Calu3 (cell line): ENCODE measurements at regions of chr12 and their contacts with region 1.

Region 1: DNA sequence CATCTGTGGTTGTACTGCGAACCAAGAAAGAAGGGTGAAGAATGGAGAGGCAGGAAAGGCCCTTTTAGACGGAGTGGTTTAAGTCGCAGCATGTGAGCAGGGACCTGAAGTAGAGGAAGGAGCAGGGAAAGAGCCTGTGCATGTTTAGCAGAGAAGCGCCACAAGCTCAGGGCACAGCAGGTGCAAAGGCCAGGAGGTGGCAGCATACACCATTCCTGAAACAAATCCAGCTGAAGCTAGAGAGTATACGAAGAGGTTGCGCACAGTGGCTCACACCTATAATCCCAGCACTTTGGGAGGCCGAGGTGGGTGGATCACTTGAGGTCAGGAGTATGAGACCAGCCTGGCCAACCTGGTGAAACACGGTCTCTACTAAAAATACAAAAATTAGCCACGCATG is 49.9 kb downstream of the HELB start:
- DNase-seq: peak; percentile 58
- H3K4me3 Mint-ChIP-seq: no peak overlapping the region
- H3K27ac Mint-ChIP-seq: no peak overlapping the region
- H3K4me1 Mint-ChIP-seq: no peaks in the 10 kb centered on the region
- H3K27me3 Mint-ChIP-seq: no peaks in the 10 kb centered on the region
- CTCF ChIP-seq: peak; percentile 29

Region 2: DNA sequence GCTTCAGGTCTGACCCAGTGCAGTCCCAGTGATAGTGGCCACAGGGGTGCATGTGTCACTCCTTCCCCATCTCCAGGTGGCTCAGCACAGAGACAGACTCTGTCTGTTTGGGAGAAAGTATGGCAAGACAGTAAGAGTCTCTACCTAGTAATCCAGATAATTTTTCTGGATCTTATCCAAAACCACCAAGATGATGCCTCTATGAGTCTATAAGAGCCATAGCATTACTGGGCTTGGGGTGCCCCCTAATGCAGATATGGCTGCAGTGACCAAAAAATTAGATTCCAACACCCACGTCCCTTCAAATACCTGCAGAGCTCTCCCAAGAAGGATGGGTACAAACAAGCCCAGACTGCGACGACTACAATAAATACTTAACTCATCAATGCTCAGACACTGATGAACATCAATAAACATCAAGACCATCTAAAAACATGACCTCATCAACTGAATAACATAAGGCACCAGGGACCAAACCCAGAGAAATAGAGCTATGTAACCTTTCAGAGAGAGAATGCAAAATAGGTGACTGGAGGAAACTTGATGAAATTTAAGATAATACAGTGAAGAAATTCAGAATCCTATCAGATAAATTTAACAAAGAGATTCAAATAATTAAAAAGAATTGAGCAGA is 203.0 kb after region 1 on chr12:
- CTCF ChIA-PET with region 1: interaction called, 6 read pairs
- intact Hi-C with region 1: loop called (anchors 10 kb)
- DNase-seq: peak; percentile 30
- H3K4me3 Mint-ChIP-seq: no peak overlapping the region
- H3K27ac Mint-ChIP-seq: no peak overlapping the region
- H3K4me1 Mint-ChIP-seq: no peaks in the 10 kb centered on the region
- H3K27me3 Mint-ChIP-seq: no peaks in the 10 kb centered on the region
- CTCF ChIP-seq: peak; percentile 26

Region 3: DNA sequence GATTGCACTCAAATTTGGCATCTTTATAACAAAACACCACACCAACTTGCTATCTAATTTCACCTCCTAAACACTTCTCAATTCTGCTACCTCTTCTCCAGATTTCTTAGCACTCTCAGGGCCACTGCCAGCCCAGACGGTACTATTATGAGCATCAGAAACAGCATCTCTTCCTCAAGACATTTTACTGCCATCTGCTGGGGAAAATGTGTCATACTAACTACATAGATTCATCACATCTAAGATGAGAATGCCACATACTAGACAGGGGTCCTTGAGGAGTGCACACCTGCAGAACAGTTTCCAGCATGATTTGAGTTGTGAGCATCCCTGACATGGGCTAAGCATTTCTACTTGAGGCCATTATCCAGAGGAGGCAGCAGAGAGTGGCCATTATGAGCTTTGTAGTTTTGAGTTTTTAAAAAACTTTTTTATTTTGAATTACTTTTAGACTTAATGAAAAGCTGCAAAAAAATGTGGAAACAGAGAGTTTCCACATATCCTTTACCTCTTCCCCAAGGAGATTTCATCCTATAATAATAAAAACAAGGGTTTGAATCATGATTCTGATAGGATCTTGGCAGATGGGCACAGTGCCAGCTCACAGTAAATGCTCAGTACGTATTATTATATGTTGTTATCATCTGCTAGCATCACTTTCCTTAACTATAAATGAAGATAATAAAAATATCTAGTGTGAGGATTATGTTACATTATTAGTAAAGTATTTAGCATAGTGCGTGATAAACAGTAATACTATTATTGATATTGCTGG is 341.9 kb after region 1 on chr12:
- CTCF ChIA-PET with region 1: interaction called, 5 read pairs
- intact Hi-C with region 1: loop called (anchors 2 kb)
- DNase-seq: peak; percentile 43
- H3K4me3 Mint-ChIP-seq: no peak overlapping the region
- H3K27ac Mint-ChIP-seq: no peak overlapping the region
- H3K4me1 Mint-ChIP-seq: peaks cover 9% of the 10 kb centered on the region
- H3K27me3 Mint-ChIP-seq: no peaks in the 10 kb centered on the region
- CTCF ChIP-seq: peak; percentile 72

Region 4: DNA sequence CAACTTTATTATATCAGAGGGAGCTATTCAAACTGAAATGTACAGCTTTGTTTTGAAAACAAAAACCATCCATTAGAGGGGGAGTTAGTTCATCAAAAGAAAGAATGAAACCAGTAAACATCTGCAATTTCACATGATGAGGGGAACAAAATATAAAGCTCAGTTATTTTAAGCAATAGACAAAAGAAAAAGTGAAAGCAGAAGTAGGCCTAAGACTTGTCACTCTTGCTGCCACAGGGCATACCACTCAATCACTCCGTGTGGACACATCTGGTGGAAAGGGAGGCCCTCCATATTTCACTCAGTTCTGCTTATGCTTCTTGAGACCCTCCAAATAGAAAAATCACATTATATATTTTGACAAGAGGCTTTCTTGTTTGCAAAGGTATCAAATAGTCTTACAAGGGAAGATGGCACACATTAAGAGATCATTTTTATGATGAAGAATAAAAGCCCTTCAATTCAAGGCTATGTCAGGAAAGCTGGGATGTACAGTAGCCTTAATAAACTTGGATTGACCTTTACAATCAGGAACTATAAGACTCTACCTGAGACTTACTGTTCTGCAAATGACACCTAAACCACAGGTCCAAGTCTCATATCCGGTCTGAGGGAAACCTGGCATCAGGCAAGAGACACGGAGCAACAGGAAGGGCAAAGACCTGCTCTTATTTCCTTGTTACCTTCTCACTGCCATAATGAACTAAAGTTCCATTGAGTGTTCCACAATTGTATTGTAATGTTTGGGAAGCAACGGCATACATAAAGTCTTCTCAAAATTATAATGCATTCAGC is 549.1 kb after region 1 on chr12:
- CTCF ChIA-PET with region 1: no interaction called
- intact Hi-C with region 1: no loop called
- DNase-seq: no peak
- H3K4me3 Mint-ChIP-seq: no peak overlapping the region
- H3K27ac Mint-ChIP-seq: no peak overlapping the region
- H3K4me1 Mint-ChIP-seq: peaks cover 25% of the 10 kb centered on the region
- H3K27me3 Mint-ChIP-seq: no peaks in the 10 kb centered on the region
- CTCF ChIP-seq: no peak